Gastrocnemius medialis (tissue), 4 donors: ENCODE measurements at regions of chr1 and their contacts with region 1.

Region 1: DNA sequence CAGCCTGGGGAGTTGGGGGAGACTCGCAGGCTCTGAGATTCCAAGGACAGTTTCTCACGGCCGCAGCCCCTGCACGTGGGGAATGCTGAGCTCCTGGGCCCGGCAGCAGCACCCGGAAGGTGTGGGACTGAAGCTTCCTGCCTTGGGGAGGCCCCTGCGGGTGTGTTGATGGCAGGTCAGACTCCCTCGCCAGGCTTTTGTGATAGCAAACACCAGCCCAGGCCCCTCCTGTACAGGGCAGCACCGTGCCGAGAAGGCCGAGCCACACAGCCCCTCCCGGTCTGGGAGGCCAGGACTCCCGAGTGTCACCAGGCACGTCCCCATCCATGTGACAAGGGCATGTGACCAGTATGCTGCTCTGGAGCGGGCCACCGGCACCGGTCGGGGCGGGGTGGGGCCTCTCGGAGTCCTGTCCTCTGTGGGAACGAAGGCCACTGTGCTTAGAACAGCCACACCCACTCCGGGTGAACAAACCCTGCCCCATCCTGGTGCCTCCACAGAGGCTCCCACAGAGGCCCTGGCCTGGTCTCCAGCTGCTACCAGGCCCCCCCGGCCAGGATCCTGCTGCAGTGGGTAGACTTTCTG is 31.1 kb upstream of the ARHGEF16 start:
- DNase-seq: no peak
- ATAC-seq: peak; percentile 35 to 57
- H3K4me3 ChIP-seq: no peak overlapping the region
- H3K27ac ChIP-seq: peak overlapping the region; percentile 47 to 68 (median 60)
- H3K4me1 ChIP-seq: no peaks in the 10 kb centered on the region
- H3K27me3 ChIP-seq: peaks cover 6 to 13% (median 13%) of the 10 kb centered on the region in 3 donors
- CTCF ChIP-seq: no peak
- POLR2A ChIP-seq: no peak

Region 2: DNA sequence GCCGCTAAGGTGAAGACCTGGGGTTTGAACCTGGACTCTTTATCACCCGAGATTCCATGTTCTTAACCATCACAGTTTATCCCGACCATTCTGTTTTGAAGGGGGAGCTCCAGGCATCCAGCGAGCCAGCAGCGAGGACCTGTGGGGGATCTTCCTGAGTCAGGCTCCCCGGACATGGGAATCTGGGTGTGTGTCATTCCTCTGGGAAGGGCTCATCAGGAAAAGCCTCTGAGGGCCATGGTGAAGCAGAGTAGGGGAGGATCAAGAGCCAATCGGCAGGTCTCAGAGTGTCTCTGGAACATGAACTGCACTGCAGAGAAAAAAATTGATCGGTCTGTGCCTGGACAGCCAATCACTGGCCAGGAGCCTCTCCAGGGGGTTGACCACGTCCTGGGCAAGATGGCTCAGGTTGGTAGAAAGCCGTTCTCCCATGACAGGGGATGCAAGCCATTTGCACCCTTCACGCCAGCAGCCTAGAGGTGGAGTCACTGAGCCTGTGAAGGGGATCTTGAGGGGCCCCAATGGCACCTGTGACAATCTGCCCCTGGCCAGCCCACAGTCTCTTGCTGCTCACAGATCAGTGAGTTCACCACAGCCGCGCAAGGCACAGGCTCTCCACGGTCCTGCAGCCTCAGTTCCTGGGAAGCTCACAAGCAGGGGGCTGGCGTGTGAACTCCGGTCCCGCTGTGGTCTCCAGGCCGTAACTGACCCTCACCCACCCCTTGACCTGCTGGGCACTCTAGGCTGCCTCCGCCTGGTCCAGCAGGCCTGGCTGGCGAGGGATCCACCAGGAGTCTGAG is 422.5 kb before region 1 on chr1:
- in situ Hi-C with region 1: loop called (anchors 10 to 25 kb)
- intact Hi-C with region 1: no loop called
- DNase-seq: no peak
- ATAC-seq: no peak
- H3K4me3 ChIP-seq: no peak overlapping the region
- H3K27ac ChIP-seq: no peak overlapping the region
- H3K4me1 ChIP-seq: no peaks in the 10 kb centered on the region
- H3K27me3 ChIP-seq: peaks cover 11 to 30% (median 23%) of the 10 kb centered on the region in 3 donors
- CTCF ChIP-seq: no peak
- POLR2A ChIP-seq: no peak

Region 3: GRCh38 chr1:3012456-3013291 is 410.7 kb before region 1 on chr1:
- in situ Hi-C with region 1: loop called (anchors 10 to 25 kb)
- intact Hi-C with region 1: loop called (anchors 1 kb)
- DNase-seq: peak in 1 of 2 donors; percentile 12
- ATAC-seq: peak in 1 of 2 donors; percentile 54
- H3K4me3 ChIP-seq: no peak overlapping the region
- H3K27ac ChIP-seq: no peak overlapping the region
- H3K4me1 ChIP-seq: no peaks in the 10 kb centered on the region
- H3K27me3 ChIP-seq: peaks cover 34 to 38% (median 36%) of the 10 kb centered on the region in 3 donors
- CTCF ChIP-seq: peak; percentile 12 to 88 (median 64)
- POLR2A ChIP-seq: no peak

Region 4: GRCh38 chr1:3283849-3284248 is 139.5 kb before region 1 on chr1:
- in situ Hi-C with region 1: no loop called
- intact Hi-C with region 1: loop called (anchors 10 kb)
- DNase-seq: no peak
- ATAC-seq: no peak
- H3K4me3 ChIP-seq: no peak overlapping the region
- H3K27ac ChIP-seq: no peak overlapping the region
- H3K4me1 ChIP-seq: no peaks in the 10 kb centered on the region
- H3K27me3 ChIP-seq: peaks cover 8 to 32% (median 26%) of the 10 kb centered on the region in 3 donors
- CTCF ChIP-seq: peak in 4 of 5 experiments; percentile 10 to 70 (median 56)
- POLR2A ChIP-seq: no peak

Region 5: DNA sequence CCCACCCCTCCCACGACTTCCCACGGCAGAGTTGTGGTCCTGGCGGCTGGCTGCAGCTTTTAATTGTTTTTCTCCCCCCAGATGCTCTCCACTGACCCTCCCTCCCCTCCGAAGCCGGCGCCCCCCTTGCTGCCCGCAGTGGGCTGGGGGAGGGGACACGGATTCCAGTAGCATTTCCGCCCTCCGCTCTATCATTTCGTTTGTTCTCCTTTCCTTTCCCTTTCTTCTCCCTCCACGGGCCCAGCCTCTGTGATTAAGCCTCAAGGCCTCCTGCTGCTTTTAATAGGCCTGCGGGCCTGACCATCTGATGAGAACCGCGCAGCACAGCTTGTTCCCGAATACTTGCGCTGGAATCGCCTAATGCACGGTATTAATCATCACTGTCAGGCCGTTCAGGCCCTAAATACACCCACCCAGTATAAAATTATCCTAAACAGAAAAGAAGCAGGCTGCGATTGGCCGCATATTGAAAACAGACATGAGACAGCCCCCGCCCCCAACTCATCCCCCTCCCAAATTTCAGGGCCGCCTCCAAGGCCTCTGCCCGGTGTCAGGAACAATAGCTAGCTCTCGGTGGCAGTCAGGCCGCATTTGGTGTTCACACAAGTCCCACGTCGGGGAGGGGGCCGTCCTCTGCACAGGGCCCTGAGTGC is 70.9 kb before region 1 on chr1:
- in situ Hi-C with region 1: no loop called
- intact Hi-C with region 1: loop called (anchors 5 kb)
- DNase-seq: no peak
- ATAC-seq: peak in 1 of 2 donors; percentile 53
- H3K4me3 ChIP-seq: no peak overlapping the region
- H3K27ac ChIP-seq: peak overlapping the region; percentile 2 to 51 (median 26)
- H3K4me1 ChIP-seq: peaks cover 0 to 3% of the 10 kb centered on the region in 2 donors
- H3K27me3 ChIP-seq: peaks cover 6 to 10% (median 9%) of the 10 kb centered on the region in 3 donors
- CTCF ChIP-seq: no peak
- POLR2A ChIP-seq: peak in 1 of 2 donors; percentile 5